H1 (cell line): ENCODE measurements at regions of chrX and their contacts with region 1.

Region 1: GRCh38 chrX:51148848-51149247 is 183.8 kb upstream of the NUDT10 start:
- DNase-seq: peak; percentile 9 to 44
- H3K4me3 ChIP-seq: no peak overlapping the region
- H3K27ac ChIP-seq: no peak overlapping the region
- H3K4me1 ChIP-seq: peaks cover 0 to 2% (median 0%) of the 10 kb centered on the region in 4 experiments; a peak in 1 of 7 replicates
- H3K27me3 ChIP-seq: no peaks in the 10 kb centered on the region
- CTCF ChIP-seq: peak in 2 of 3 experiments; percentile 62 to 63; a peak in 3 of 4 replicates
- EP300 ChIP-seq: no peak
- POLR2A ChIP-seq: no peak
- RAD21 ChIP-seq: peak; percentile 87 to 88

Region 2: DNA sequence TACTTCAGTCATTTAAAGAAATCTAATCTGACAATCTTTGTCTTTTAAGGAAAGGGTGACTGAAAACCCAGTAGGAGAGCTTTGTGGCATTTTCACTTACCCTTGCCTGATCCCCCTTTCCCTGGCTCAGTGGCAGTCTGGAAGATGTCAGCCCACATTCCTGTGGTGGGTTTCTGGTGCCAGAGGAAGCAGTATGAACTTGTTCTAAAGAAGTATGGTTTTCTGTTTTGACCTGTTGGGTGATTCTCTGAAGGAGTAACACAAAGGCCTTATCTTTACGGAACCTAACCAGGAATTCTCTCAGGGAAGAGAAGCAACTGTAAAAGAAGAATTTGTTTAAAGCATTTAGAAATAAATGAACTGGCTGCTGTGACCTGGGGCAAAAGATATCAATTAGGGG is 196.4 kb before region 1 on chrX:
- CTCF ChIA-PET with region 1: no interaction called
- POLR2A ChIA-PET with region 1: no interaction called
- DNase-seq: no peak
- H3K4me3 ChIP-seq: no peak overlapping the region
- H3K27ac ChIP-seq: no peak overlapping the region
- H3K4me1 ChIP-seq: no peaks in the 10 kb centered on the region
- H3K27me3 ChIP-seq: no peaks in the 10 kb centered on the region
- CTCF ChIP-seq: no peak
- EP300 ChIP-seq: no peak
- POLR2A ChIP-seq: no peak
- RAD21 ChIP-seq: no peak

Region 3: GRCh38 chrX:51169410-51169809 is 20.6 kb after region 1 on chrX:
- CTCF ChIA-PET with region 1: interaction called, 10 read pairs
- POLR2A ChIA-PET with region 1: no interaction called
- DNase-seq: no peak
- H3K4me3 ChIP-seq: no peak overlapping the region
- H3K27ac ChIP-seq: no peak overlapping the region
- H3K4me1 ChIP-seq: no peaks in the 10 kb centered on the region
- H3K27me3 ChIP-seq: no peaks in the 10 kb centered on the region
- CTCF ChIP-seq: no peak
- EP300 ChIP-seq: no peak
- POLR2A ChIP-seq: no peak
- RAD21 ChIP-seq: no peak

Region 4: DNA sequence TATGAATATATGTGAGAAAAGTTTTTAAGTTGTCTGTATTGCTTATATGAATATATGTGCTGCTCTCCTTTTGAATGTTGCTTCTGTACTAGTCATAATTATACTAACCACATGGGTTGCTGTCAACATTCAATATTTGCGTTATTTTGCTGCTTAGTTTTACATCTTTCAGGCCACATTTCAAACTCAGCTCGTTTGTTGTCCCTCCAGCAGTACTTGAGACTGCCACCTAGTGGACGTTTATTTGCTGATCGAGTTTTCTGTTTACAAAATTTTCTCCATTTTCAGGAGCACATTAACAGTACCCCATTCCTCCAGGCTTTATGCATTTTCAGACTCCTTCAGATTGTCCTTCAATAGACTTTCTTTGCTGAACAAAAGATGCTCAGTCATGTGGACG is 271.8 kb after region 1 on chrX:
- CTCF ChIA-PET with region 1: interaction called, 10 read pairs
- POLR2A ChIA-PET with region 1: no interaction called
- DNase-seq: no peak
- H3K4me3 ChIP-seq: no peak overlapping the region
- H3K27ac ChIP-seq: no peak overlapping the region
- H3K4me1 ChIP-seq: peaks cover 0 to 3% (median 0%) of the 10 kb centered on the region in 4 experiments; a peak in 2 of 7 replicates
- H3K27me3 ChIP-seq: no peaks in the 10 kb centered on the region
- CTCF ChIP-seq: peak in 2 of 3 experiments; percentile 37 to 56; a peak in 2 of 4 replicates
- EP300 ChIP-seq: no peak
- POLR2A ChIP-seq: no peak
- RAD21 ChIP-seq: peak; percentile 49 to 59

Region 5: GRCh38 chrX:51461053-51462044 is 312.5 kb after region 1 on chrX:
- CTCF ChIA-PET with region 1: interaction called, 22 read pairs
- POLR2A ChIA-PET with region 1: interaction called, 3 read pairs
- DNase-seq: no peak
- H3K4me3 ChIP-seq: no peak overlapping the region
- H3K27ac ChIP-seq: no peak overlapping the region
- H3K4me1 ChIP-seq: peaks cover 0 to 3% (median 0%) of the 10 kb centered on the region in 4 experiments; a peak in 1 of 7 replicates
- H3K27me3 ChIP-seq: no peaks in the 10 kb centered on the region
- CTCF ChIP-seq: peak in 2 of 3 experiments; percentile 27 to 52; a peak in 2 of 4 replicates
- EP300 ChIP-seq: no peak
- POLR2A ChIP-seq: no peak
- RAD21 ChIP-seq: peak; percentile 45 to 49